Dendritic cell treated with granulocyte-macrophage colony-stimulating factor and Interleukin-4, amounts not matched to agents 40 ng/mL and 50 ng/mL, for 4 days (primary cell): ENCODE measurements at regions of chr18 and their contacts with region 1.

Region 1: GRCh38 chr18:2655178-2655953 is at the start of gene SMCHD1:
- H3K4me3 Mint-ChIP-seq: peak within 1 kb of the TSS; percentile 94
- H3K27ac Mint-ChIP-seq: peak within 1 kb of the TSS; percentile 98
- H3K4me1 Mint-ChIP-seq: peaks cover 23% of the 10 kb centered on the region
- H3K27me3 Mint-ChIP-seq: no peaks in the 10 kb centered on the region

Region 2: DNA sequence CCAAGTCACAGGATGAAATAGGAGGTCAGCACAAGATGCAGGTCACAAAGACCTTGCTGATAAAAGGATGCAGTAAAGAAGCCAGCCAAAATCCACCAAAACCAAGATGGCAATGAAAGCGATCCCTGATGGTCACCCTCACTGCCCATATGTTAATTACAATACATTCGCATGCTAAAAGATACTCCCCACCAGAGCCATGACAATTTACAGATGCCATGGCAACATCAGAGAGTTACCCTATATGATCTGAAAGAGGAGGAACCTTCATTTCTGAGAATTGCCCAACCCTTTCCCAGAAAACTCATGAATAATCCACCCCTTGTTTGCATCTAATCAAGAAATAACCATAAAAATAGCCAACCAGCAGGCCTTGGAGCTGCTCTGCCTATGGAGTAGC is 793.9 kb before region 1 on chr18:
- intact Hi-C with region 1: no loop called
- H3K4me3 Mint-ChIP-seq: no peak overlapping the region
- H3K27ac Mint-ChIP-seq: no peak overlapping the region
- H3K4me1 Mint-ChIP-seq: no peaks in the 10 kb centered on the region
- H3K27me3 Mint-ChIP-seq: no peaks in the 10 kb centered on the region

Region 3: GRCh38 chr18:2480575-2480974 is 174.8 kb before region 1 on chr18:
- intact Hi-C with region 1: no loop called
- H3K4me3 Mint-ChIP-seq: no peak overlapping the region
- H3K27ac Mint-ChIP-seq: no peak overlapping the region
- H3K4me1 Mint-ChIP-seq: peaks cover 5% of the 10 kb centered on the region
- H3K27me3 Mint-ChIP-seq: peaks cover 13% of the 10 kb centered on the region

Region 4: DNA sequence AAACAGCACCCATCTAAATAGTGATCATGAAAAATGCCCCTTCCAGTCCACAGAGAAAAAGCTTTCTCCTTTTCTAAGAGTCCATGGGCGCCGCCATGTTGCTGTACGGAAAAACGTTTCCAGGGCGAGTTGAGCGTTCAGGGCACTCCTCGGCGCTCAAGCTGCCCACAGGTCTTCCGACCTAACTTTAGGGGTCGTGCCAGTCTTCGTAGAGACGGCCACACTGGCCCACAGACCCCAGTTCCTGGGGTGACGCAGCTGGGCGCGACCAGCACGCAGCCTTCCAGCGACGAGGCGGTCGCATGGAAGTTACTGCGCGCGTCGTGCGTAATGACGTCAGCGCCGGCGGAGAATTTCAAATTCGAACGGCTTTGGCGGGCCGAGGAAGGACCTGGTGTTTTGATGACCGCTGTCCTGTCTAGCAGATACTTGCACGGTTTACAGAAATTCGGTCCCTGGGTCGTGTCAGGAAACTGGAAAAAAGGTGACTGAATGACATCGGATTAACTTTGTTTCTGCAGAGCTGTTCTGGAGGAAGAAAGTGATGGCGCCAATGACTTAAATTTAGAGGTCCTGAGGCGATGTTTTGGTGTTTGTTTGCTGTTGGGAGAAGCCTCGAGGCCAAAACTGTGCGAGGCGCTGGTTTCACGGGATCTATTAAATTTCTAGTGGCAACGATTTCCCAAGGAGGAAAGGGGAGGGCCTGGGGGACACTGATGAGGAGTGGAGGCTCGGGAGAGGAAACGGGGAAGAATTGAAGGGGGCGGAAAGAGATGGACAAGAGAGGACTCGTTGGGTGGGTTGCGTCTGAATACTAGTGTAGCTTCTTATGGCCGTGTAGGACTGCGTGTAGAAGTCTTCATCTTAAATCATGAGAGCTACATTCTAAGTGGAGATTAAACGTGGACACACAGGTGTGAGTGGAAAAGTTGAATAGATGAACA is 83.9 kb before region 1 on chr18 and contains the starts of genes METTL4 and NDC80:
- intact Hi-C with region 1: loop called (anchors 1 kb)
- H3K4me3 Mint-ChIP-seq: peak within 1 kb of the TSS; percentile 100
- H3K27ac Mint-ChIP-seq: peak within 1 kb of the TSS; percentile 100
- H3K4me1 Mint-ChIP-seq: peaks cover 28% of the 10 kb centered on the region
- H3K27me3 Mint-ChIP-seq: no peaks in the 10 kb centered on the region

Region 5: GRCh38 chr18:2606335-2606734 is 49.0 kb before region 1 on chr18:
- intact Hi-C with region 1: loop called (anchors 5 kb)
- H3K4me3 Mint-ChIP-seq: no peak overlapping the region
- H3K27ac Mint-ChIP-seq: peak overlapping the region; percentile 32
- H3K4me1 Mint-ChIP-seq: peaks cover 20% of the 10 kb centered on the region
- H3K27me3 Mint-ChIP-seq: no peaks in the 10 kb centered on the region

Region 6: DNA sequence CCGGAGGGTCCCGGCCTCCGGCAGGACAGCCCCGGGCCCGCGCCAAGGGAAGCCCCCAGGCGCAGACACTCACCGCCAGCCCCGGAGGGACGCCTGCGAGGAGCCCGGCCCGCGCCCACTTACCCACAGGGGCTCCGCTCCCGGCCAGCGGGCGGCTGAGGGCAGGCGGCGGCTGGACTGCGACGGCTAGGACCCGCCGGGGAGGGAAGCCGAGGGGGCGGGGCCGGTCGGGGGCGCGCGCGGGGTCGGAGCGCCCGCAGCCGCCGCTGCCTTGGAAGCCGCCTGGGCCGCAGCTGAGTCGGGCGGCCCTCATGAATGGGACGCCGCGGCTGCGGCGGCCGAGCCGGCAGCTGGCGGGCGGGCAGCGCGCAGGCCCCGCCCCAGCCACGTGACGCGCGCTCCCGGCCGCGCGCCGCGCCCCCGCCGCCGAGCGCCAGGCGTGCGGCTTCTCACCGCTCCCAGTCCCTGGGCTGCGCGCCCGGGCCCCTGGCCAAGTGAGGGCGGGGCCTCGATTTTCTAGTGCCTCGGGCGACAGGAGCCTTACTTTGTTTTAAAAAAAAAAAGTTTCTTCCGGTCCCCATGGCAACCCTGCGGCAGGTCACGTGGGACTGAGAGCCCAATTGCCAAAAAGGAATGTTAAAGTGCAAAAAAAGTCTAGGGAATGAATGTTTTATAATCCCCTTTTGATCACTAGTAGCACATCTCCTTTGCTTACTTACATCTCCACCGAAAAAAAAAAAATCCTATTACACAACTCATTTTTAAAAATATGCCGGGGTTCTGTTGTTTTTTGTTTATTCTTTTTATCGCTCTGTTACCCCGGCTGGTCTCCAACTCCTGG is 357.8 kb after region 1 on chr18 and contains the start of gene LPIN2:
- intact Hi-C with region 1: loop called (anchors 5 kb)
- H3K4me3 Mint-ChIP-seq: peak within 1 kb of the TSS; percentile 78
- H3K27ac Mint-ChIP-seq: peak within 1 kb of the TSS; percentile 83
- H3K4me1 Mint-ChIP-seq: peaks cover 74% of the 10 kb centered on the region
- H3K27me3 Mint-ChIP-seq: no peaks in the 10 kb centered on the region